K562 (cell line): ENCODE measurements at regions of chr1 and their contacts with region 1.

Region 1: DNA sequence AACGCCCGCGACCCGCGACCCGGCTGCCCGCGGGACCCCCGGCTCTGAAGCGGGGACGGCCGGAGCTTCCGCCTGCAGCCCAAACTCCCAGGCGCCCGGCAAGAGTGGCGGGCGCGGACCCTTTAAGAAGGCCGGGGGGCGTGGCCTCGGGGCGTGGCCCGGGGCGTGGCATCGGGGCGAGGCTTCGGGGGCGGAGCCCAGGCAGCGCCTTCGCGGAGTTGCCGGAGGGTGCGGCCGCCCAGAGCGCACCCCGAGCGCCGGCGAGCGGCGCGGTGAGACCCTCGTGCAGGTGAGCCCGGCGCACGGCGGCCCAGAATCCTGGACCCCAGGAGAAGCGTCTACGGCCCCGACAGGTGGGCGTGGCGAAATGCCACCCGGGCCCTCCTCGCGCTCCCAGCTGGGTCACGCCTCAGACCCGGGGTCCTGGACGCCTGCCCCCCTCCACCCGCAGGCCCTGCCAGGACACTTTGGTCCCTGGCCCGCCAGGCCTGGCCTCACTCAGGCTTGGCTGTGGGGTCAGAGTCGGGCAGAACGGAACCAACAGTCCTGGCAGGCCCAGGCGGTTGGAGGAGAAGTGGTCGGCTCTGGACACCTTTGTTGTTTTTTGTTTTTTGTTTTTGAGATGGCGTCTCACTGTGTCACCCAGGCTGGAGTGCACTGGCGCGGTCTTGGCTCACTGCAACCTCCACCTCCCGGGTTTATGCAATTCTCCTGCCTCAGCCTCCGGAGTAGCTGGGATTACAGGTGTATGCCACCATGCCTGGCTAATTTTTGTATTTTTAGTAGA is 14.4 kb downstream of the RNF223 start:
- DNase-seq: peak; percentile 94 to 97 (median 94)
- ATAC-seq: peak; percentile 87
- H3K4me3 ChIP-seq: peak overlapping the region; percentile 69
- H3K27ac ChIP-seq: peak overlapping the region; percentile 67
- H3K4me1 ChIP-seq: peaks cover 50 to 85% of the 10 kb centered on the region in 2 experiments
- H3K27me3 ChIP-seq: no peaks in the 10 kb centered on the region
- CTCF ChIP-seq: no peak
- EP300 ChIP-seq: no peak
- POLR2A ChIP-seq: no peak; the same call in 1 of the 2 replicates
- RAD21 ChIP-seq: no peak

Region 2: DNA sequence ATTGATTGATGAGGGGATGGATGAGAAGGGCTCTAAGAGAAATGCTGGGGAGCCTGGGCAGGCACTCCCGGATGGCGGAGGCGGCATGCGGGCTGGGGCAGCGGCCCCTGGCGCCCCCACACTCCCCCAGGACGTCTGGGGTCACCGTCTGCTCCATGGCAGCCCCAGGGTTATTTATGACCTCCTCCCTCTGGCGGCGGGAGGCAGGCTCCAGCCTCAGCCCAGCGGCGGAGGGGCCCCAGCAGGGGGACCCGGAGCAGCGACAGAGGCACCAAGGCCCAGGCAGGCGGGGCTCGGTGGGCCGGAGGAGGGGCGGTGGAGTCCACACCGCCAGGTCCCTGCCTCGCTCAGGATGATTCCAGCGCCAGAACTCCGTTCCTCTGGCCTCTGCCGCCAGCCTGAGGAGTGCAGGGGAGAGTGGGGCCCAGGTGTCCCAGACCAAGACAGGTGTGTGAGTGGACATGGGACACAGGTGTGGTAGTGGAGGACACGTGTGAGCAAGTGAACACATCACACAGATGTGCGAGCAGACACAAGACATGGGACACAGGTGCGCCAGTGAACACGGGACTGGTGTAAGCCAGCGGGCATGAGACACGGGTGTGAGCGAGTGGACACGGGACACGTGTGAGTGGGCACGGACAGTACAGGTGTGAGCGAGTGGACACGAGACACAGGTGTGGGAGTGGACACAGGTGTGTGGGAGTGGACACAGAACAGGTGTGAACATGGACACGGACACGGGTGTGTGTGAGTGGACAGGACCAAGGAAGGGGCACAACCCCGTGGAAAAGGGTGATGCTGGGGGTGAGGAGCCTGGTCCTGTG is 138.5 kb before region 1 on chr1:
- CTCF ChIA-PET with region 1: no interaction called
- POLR2A ChIA-PET with region 1: no interaction called
- in situ Hi-C with region 1: no loop called
- intact Hi-C with region 1: loop called (anchors 5 kb)
- DNase-seq: peak; percentile 91 to 94 (median 92)
- ATAC-seq: peak; percentile 84
- H3K4me3 ChIP-seq: no peak overlapping the region
- H3K27ac ChIP-seq: no peak overlapping the region
- H3K4me1 ChIP-seq: peaks cover 21 to 99% of the 10 kb centered on the region in 2 experiments
- H3K27me3 ChIP-seq: peaks cover 37 to 77% of the 10 kb centered on the region in 2 experiments
- CTCF ChIP-seq: peak; percentile 48 to 77 (median 56); a peak in 5 of 6 replicates
- EP300 ChIP-seq: peak; percentile 77
- POLR2A ChIP-seq: no peak
- RAD21 ChIP-seq: peak in 1 of 2 experiments; percentile 42; a peak in 2 of 4 replicates

Region 3: GRCh38 chr1:983799-984473 is 75.8 kb before region 1 on chr1:
- CTCF ChIA-PET with region 1: interaction called, 27 read pairs
- POLR2A ChIA-PET with region 1: no interaction called
- in situ Hi-C with region 1: loop called (anchors 10 kb)
- intact Hi-C with region 1: loop called (anchors 1 kb)
- DNase-seq: peak; percentile 69 to 90 (median 88)
- ATAC-seq: peak; percentile 82
- H3K4me3 ChIP-seq: no peak overlapping the region
- H3K27ac ChIP-seq: no peak overlapping the region
- H3K4me1 ChIP-seq: peaks cover 0 to 51% of the 10 kb centered on the region in 2 experiments; a peak in 2 of 5 replicates
- H3K27me3 ChIP-seq: peaks cover 39 to 51% of the 10 kb centered on the region in 2 experiments; a peak in 4 of 5 replicates
- CTCF ChIP-seq: peak; percentile 54 to 90 (median 77); a peak in 4 of 6 replicates
- EP300 ChIP-seq: no peak
- POLR2A ChIP-seq: no peak
- RAD21 ChIP-seq: peak; percentile 68 to 82

Region 4: GRCh38 chr1:999725-1000356 is 59.8 kb before region 1 on chr1 and contains the start of gene HES4:
- CTCF ChIA-PET with region 1: no interaction called
- POLR2A ChIA-PET with region 1: no interaction called
- in situ Hi-C with region 1: no loop called
- intact Hi-C with region 1: loop called (anchors 5 kb)
- DNase-seq: peak in 3 of 4 experiments; percentile 88 to 98 (median 95)
- ATAC-seq: peak; percentile 75
- H3K4me3 ChIP-seq: peak within 1 kb of the TSS; percentile 52
- H3K27ac ChIP-seq: peak within 1 kb of the TSS; percentile 95
- H3K4me1 ChIP-seq: peaks cover 24 to 89% of the 10 kb centered on the region in 2 experiments
- H3K27me3 ChIP-seq: peaks cover 0 to 2% of the 10 kb centered on the region in 2 experiments; a peak in 1 of 5 replicates
- CTCF ChIP-seq: no peak
- EP300 ChIP-seq: no peak
- POLR2A ChIP-seq: no peak
- RAD21 ChIP-seq: no peak
- polyA plus RNA-seq, gene HES4: not detected

Region 5: GRCh38 chr1:1020000-1020404 is 39.7 kb before region 1 on chr1 and contains the start of gene AGRN:
- CTCF ChIA-PET with region 1: no interaction called
- POLR2A ChIA-PET with region 1: interaction called, 3 read pairs
- in situ Hi-C with region 1: no loop called
- intact Hi-C with region 1: loop called (anchors 5 kb)
- DNase-seq: peak in 1 of 4 experiments; percentile 72
- ATAC-seq: peak; percentile 56
- H3K4me3 ChIP-seq: peak within 1 kb of the TSS; percentile 76
- H3K27ac ChIP-seq: peak within 1 kb of the TSS; percentile 84
- H3K4me1 ChIP-seq: peaks cover 29 to 68% of the 10 kb centered on the region in 2 experiments
- H3K27me3 ChIP-seq: no peaks in the 10 kb centered on the region
- CTCF ChIP-seq: no peak
- EP300 ChIP-seq: no peak
- POLR2A ChIP-seq: no peak
- RAD21 ChIP-seq: no peak
- polyA plus RNA-seq, gene AGRN: 0.04 to 0.06 TPM

Region 6: DNA sequence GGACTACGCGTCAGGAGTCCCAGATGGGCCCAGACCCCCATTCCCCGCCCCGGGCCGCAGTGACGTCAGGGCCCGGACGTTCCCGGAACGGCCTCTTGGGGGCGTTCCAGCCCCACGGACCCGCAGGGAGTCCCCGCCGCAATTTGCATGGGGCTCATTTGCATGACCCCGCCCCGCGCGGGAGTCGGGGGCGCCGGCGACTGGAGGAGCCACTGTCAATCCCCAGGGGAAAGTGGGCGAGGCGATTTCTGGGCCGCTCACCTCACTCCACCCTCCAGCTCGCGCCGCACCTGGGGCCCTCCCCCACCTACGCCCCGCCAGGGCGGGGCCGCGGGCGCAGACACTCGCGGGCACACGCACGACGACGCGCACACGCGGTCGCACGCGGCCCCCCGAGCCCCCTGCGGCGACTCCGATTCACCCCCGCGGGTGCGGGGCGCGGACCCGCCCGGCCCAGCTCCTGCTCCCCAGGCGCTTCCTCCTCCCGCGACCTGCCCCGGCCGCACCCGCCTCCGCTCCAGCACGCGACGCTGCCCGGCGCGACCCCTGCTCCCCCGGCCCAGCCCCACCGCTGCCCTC is 26.6 kb before region 1 on chr1:
- CTCF ChIA-PET with region 1: no interaction called
- POLR2A ChIA-PET with region 1: interaction called, 4 read pairs
- in situ Hi-C with region 1: no loop called
- intact Hi-C with region 1: loop called (anchors 1 kb)
- DNase-seq: peak; percentile 90 to 96 (median 92)
- ATAC-seq: peak; percentile 99
- H3K4me3 ChIP-seq: peak overlapping the region; percentile 35
- H3K27ac ChIP-seq: peak overlapping the region; percentile 52; the same call in 1 of the 3 replicates
- H3K4me1 ChIP-seq: peaks cover 0 to 65% of the 10 kb centered on the region in 2 experiments; a peak in 3 of 5 replicates
- H3K27me3 ChIP-seq: no peaks in the 10 kb centered on the region
- CTCF ChIP-seq: peak; percentile 85 to 93 (median 89)
- EP300 ChIP-seq: no peak
- POLR2A ChIP-seq: no peak
- RAD21 ChIP-seq: peak; percentile 83

Region 7: GRCh38 chr1:2539312-2539907 is 1479.7 kb after region 1 on chr1:
- CTCF ChIA-PET with region 1: no interaction called
- POLR2A ChIA-PET with region 1: no interaction called
- in situ Hi-C with region 1: no loop called
- intact Hi-C with region 1: no loop called
- DNase-seq: peak in 3 of 4 experiments; percentile 51 to 69 (median 64)
- ATAC-seq: peak; percentile 73
- H3K4me3 ChIP-seq: no peak overlapping the region
- H3K27ac ChIP-seq: no peak overlapping the region
- H3K4me1 ChIP-seq: peaks cover 38 to 81% of the 10 kb centered on the region in 2 experiments
- H3K27me3 ChIP-seq: peaks cover 10 to 36% of the 10 kb centered on the region in 2 experiments; a peak in 4 of 5 replicates
- CTCF ChIP-seq: peak; percentile 58 to 71 (median 64)
- EP300 ChIP-seq: no peak
- POLR2A ChIP-seq: no peak
- RAD21 ChIP-seq: peak in 1 of 2 experiments; percentile 60; a peak in 2 of 4 replicates